CD8-positive, alpha-beta T cell (primary cell): ENCODE measurements at regions of chr11 and their contacts with region 1.

Region 1: DNA sequence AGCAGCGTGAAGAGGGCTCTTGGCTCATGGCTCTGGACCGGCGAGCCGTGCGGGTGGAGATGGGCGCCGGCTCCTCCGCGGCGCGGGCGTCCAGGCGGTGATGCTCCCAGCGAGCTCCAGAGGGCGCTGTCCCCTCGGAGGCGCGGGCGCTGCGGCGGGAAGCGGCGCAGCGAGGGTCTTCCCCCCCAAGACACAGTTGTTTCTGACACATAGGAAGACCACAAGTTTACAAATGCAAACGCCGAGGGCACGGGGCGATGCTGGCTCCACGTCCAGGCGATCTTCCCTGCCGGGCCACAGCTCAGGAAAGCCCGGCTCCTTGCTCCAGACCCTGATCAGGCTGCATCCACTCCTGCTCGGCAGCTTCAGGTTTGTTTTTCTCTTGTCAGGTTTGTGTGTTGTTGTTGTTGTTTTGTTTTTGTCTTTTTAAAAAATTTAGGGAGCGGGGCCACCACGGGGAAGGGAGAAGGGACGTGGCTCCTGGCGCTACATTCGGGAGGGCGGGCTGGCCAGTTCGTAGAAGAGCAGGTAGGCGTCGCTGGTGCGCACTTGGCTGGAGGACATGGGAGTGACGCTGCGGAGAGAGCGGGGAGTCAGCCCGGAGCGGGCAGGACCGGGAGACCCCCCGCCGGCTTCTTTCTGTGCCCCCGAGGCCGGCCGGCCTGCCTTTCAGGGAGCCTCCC is 10.0 kb upstream of the MFRP start:
- DNase-seq: peak; percentile 54 to 86 (median 73)
- ATAC-seq: peak; percentile 92
- H3K4me3 ChIP-seq: peak overlapping the region; percentile 73 to 96
- H3K4me3 Mint-ChIP-seq: peak overlapping the region; percentile 91
- H3K27ac ChIP-seq: no peak overlapping the region
- H3K27ac Mint-ChIP-seq: peak overlapping the region; percentile 76
- H3K4me1 ChIP-seq: no peaks in the 10 kb centered on the region
- H3K4me1 Mint-ChIP-seq: peaks cover 7% of the 10 kb centered on the region
- H3K27me3 ChIP-seq: peaks cover 0 to 15% of the 10 kb centered on the region in 2 experiments
- H3K27me3 Mint-ChIP-seq: peaks cover 20% of the 10 kb centered on the region
- CTCF ChIP-seq: peak; percentile 100

Region 2: DNA sequence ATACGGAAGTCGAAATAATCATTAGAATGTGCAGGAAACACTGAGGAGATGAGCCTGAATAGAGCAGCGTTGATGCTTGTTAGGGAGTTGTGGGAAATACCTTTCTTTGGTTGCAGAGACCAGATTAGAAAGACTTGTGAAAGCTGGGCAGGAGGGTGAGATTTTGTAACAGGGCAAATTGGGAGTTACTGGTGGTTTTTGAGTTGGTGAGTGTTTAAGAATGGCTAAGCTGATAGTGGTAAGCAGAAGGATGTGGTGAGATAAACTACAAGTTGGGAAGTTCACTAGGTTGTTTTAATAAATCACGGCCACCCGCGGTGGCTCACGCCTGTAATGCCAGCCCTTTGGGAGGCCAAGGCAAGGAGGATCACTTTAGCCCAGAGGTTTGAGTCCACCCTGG is 74.0 kb before region 1 on chr11:
- CTCF ChIA-PET with region 1: no interaction called
- POLR2A ChIA-PET with region 1: no interaction called
- intact Hi-C with region 1: no loop called
- DNase-seq: peak in 1 of 9 experiments; percentile 35
- ATAC-seq: no peak
- H3K4me3 ChIP-seq: no peak overlapping the region
- H3K4me3 Mint-ChIP-seq: no peak overlapping the region
- H3K27ac ChIP-seq: no peak overlapping the region
- H3K27ac Mint-ChIP-seq: peak overlapping the region; percentile 50
- H3K4me1 ChIP-seq: peaks cover 18% of the 10 kb centered on the region
- H3K4me1 Mint-ChIP-seq: peaks cover 34% of the 10 kb centered on the region
- H3K27me3 ChIP-seq: no peaks in the 10 kb centered on the region
- H3K27me3 Mint-ChIP-seq: no peaks in the 10 kb centered on the region
- CTCF ChIP-seq: no peak

Region 3: GRCh38 chr11:119323538-119324033 is 32.9 kb before region 1 on chr11:
- CTCF ChIA-PET with region 1: interaction called, 13 read pairs
- POLR2A ChIA-PET with region 1: no interaction called
- intact Hi-C with region 1: no loop called
- DNase-seq: peak; percentile 65 to 88 (median 76)
- ATAC-seq: peak; percentile 18
- H3K4me3 ChIP-seq: no peak overlapping the region
- H3K4me3 Mint-ChIP-seq: no peak overlapping the region
- H3K27ac ChIP-seq: no peak overlapping the region
- H3K27ac Mint-ChIP-seq: no peak overlapping the region
- H3K4me1 ChIP-seq: peaks cover 11% of the 10 kb centered on the region
- H3K4me1 Mint-ChIP-seq: peaks cover 26% of the 10 kb centered on the region
- H3K27me3 ChIP-seq: peaks cover 0 to 2% of the 10 kb centered on the region in 2 experiments
- H3K27me3 Mint-ChIP-seq: peaks cover 1% of the 10 kb centered on the region
- CTCF ChIP-seq: peak; percentile 77

Region 4: DNA sequence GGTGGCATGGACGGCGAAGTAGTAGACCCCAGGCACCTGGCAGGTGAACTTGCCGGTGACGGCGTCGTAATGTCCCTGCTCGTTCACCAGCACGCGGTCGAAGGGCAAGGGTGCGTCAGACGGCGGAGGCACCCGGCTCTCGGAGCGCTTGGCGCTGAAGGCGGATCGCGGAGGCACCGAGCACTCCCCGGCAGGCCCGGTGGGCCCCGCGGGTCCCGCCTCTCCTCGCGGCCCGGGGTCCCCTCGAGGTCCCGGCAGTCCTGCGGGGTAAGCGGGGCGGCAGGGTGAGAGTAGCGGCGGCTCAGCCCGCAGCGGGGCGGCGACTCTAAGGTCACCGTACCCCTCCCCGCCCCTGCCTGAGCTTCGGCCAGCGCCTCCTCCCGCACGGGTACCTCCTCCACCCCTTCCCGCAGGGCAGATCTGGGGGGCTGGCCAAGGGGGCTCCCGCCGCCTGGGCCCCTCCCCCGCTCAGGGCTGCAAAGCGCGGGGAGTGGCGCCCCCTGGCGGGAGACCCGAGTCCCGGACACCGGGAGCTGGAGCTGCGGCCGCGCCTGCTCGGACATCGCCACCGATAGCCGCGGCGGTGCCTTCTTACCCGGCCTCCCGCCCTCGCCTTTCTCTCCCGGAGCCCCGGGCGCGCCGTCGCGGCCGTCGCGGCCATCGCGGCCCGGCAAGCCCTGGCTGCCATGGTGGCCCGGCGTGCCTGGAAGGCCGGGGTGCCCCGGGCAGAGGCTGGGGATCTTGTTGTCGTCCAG is 16.7 kb before region 1 on chr11:
- CTCF ChIA-PET with region 1: interaction called, 25 read pairs
- POLR2A ChIA-PET with region 1: no interaction called
- intact Hi-C with region 1: no loop called
- DNase-seq: peak in 5 of 9 experiments; percentile 26 to 53 (median 46)
- ATAC-seq: no peak
- H3K4me3 ChIP-seq: peak overlapping the region in 1 of 2 experiments; percentile 37
- H3K4me3 Mint-ChIP-seq: peak overlapping the region; percentile 45
- H3K27ac ChIP-seq: no peak overlapping the region
- H3K27ac Mint-ChIP-seq: no peak overlapping the region
- H3K4me1 ChIP-seq: peaks cover 21% of the 10 kb centered on the region
- H3K4me1 Mint-ChIP-seq: peaks cover 27% of the 10 kb centered on the region
- H3K27me3 ChIP-seq: peaks cover 28 to 30% of the 10 kb centered on the region in 2 experiments
- H3K27me3 Mint-ChIP-seq: peaks cover 37% of the 10 kb centered on the region
- CTCF ChIP-seq: peak; percentile 60

Region 5: GRCh38 chr11:119381181-119381988 is 24.9 kb after region 1 on chr11 and contains the start of gene USP2:
- CTCF ChIA-PET with region 1: interaction called, 149 read pairs
- POLR2A ChIA-PET with region 1: interaction called, 5 read pairs
- intact Hi-C with region 1: loop called (anchors 1 kb)
- DNase-seq: peak; percentile 94 to 98 (median 97)
- ATAC-seq: peak; percentile 98
- H3K4me3 ChIP-seq: peak within 1 kb of the TSS; percentile 74 to 80
- H3K4me3 Mint-ChIP-seq: no peak within 1 kb of the TSS
- H3K27ac ChIP-seq: peak within 1 kb of the TSS; percentile 57 to 73
- H3K27ac Mint-ChIP-seq: peak within 1 kb of the TSS; percentile 21
- H3K4me1 ChIP-seq: peaks cover 16% of the 10 kb centered on the region
- H3K4me1 Mint-ChIP-seq: peaks cover 7% of the 10 kb centered on the region
- H3K27me3 ChIP-seq: peaks cover 0 to 14% of the 10 kb centered on the region in 2 experiments
- H3K27me3 Mint-ChIP-seq: no peaks in the 10 kb centered on the region
- CTCF ChIP-seq: peak; percentile 92
- total RNA-seq, gene USP2: 3.4 to 5.9 TPM

Region 6: DNA sequence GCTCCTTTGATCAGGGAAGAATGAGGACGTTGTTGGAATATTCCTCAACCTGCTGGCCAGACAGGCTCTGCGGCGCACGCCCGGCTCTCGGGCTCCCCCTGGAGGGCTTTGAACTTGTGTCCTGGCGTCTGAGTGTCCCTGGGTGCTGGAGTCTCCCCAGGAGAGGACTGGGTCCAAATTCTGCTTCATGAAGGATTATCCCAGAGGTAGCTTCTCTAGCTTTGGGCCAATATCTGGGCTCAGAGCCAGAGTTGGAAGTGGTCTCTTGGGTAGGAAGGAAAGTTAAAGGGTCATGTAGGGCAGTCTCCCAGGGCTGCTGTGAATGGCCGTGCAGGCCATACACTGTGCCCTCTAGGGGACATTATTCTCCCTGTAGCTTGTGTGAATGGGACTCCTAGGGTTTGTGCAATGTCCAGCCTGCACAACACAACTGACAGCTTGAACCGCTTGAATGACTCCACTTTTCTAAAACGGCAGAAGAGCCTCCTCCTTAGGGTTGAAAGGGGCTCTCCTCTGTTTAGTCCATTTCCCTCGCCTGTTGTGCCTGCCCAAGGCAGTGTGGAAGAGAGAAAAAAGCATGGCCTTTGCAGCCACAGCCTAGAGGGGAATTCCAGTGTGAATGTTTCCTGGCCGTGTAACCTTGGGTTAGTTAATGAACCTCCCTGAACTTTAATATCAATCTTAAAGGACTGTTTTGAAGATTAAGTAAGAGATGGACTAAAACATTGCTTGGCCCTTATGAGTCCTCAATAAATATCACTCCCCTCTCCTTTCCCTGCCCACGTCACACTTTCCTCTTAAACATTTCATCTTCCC is 177.6 kb after region 1 on chr11:
- CTCF ChIA-PET with region 1: interaction called, 6 read pairs
- POLR2A ChIA-PET with region 1: no interaction called
- intact Hi-C with region 1: loop called in 1 of 2 experiments (anchors 2 kb)
- DNase-seq: peak in 8 of 9 experiments; percentile 19 to 58 (median 40)
- ATAC-seq: no peak
- H3K4me3 ChIP-seq: no peak overlapping the region
- H3K4me3 Mint-ChIP-seq: no peak overlapping the region
- H3K27ac ChIP-seq: no peak overlapping the region
- H3K27ac Mint-ChIP-seq: no peak overlapping the region
- H3K4me1 ChIP-seq: no peaks in the 10 kb centered on the region
- H3K4me1 Mint-ChIP-seq: no peaks in the 10 kb centered on the region
- H3K27me3 ChIP-seq: no peaks in the 10 kb centered on the region
- H3K27me3 Mint-ChIP-seq: peaks cover 24% of the 10 kb centered on the region
- CTCF ChIP-seq: peak; percentile 61

Region 7: DNA sequence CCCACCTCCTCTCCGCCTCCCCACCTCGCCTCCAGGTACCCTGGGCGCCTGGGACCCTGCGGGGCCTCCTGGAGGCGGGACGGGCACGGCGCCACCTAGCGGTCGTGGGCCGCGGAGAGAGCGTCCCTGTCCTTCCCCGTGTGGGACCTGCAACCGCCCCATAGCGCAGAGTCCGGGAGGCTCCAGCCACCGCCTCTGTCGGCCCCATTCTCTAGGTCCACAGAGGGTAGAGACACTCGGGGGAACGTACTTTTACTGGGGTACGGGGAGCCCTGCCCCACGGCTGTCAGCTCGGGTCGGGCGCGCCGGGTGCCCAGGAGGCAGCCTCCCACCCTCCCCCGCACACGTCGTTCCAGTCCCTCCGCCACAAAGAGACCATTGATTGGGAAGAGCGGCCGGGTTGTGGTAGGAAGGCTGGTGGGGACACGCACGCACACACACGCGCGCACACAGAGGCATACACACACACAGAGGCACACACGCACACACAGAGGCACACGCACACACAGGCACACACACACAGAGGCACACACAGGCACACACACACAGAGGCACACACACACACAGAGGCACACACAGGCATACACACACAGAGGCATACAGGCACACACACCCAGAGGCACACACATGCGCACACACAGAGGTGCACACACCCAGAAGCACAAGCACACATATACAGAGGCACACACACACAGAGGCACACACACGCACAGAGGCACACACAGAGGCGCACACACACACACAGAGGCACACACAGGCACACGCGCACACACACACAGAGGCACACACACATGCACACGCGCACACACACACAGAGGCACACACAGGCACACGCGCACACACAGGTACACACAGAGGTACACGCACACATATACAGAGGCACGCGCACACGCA is 385.1 kb after region 1 on chr11:
- CTCF ChIA-PET with region 1: no interaction called
- POLR2A ChIA-PET with region 1: no interaction called
- intact Hi-C with region 1: loop called in 1 of 2 experiments (anchors 5 kb)
- DNase-seq: peak; percentile 31 to 77 (median 62)
- ATAC-seq: peak; percentile 71
- H3K4me3 ChIP-seq: no peak overlapping the region
- H3K4me3 Mint-ChIP-seq: peak overlapping the region; percentile 64
- H3K27ac ChIP-seq: no peak overlapping the region
- H3K27ac Mint-ChIP-seq: no peak overlapping the region
- H3K4me1 ChIP-seq: peaks cover 7% of the 10 kb centered on the region
- H3K4me1 Mint-ChIP-seq: peaks cover 13% of the 10 kb centered on the region
- H3K27me3 ChIP-seq: peaks cover 0 to 16% of the 10 kb centered on the region in 2 experiments
- H3K27me3 Mint-ChIP-seq: peaks cover 41% of the 10 kb centered on the region
- CTCF ChIP-seq: peak; percentile 75